KBM-7 (cell line): ENCODE measurements at regions of chr14 and their contacts with region 1.

Region 1: DNA sequence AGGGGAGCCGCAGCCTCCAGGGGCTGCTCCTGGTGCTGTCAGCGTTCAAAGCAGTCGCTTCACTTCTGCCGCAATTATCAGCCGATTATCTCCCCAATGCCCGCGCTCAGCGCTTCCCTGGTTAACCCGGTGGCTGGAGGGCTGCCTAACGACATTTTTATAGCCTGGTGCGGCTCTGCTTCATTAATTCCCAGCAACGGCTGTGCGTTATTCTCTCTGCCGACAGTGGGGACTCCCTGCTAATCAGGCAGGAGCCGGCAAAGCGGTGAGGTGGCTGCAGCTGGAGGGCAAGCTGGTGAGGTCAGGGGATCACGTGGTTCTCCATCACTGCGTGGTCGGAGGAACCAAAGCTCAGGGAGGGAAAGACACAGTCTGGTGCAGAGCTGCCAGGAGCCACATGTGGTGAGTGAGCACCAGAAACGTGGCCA is 62.9 kb downstream of the GLRX5 start:
- DNase-seq: no peak

Region 2: GRCh38 chr14:95993768-95994592 is 396.2 kb after region 1 on chr14:
- in situ Hi-C with region 1: loop called (anchors 25 kb)
- DNase-seq: peak; percentile 30